ENCODE measurements at regions of chr2 and their contacts with region 1.

Region 1: GRCh38 chr2:85750587-85751575 is 2.9 kb upstream of the ATOH8 start:
- DNase-seq: no peak
- ATAC-seq: peak; percentile 74
- H3K4me3 ChIP-seq: no peak overlapping the region
- H3K27ac ChIP-seq: no peak overlapping the region
- H3K4me1 ChIP-seq: peaks cover 20% of the 10 kb centered on the region
- H3K27me3 ChIP-seq: no peaks in the 10 kb centered on the region
- CTCF ChIP-seq: peak; percentile 92

Region 2: DNA sequence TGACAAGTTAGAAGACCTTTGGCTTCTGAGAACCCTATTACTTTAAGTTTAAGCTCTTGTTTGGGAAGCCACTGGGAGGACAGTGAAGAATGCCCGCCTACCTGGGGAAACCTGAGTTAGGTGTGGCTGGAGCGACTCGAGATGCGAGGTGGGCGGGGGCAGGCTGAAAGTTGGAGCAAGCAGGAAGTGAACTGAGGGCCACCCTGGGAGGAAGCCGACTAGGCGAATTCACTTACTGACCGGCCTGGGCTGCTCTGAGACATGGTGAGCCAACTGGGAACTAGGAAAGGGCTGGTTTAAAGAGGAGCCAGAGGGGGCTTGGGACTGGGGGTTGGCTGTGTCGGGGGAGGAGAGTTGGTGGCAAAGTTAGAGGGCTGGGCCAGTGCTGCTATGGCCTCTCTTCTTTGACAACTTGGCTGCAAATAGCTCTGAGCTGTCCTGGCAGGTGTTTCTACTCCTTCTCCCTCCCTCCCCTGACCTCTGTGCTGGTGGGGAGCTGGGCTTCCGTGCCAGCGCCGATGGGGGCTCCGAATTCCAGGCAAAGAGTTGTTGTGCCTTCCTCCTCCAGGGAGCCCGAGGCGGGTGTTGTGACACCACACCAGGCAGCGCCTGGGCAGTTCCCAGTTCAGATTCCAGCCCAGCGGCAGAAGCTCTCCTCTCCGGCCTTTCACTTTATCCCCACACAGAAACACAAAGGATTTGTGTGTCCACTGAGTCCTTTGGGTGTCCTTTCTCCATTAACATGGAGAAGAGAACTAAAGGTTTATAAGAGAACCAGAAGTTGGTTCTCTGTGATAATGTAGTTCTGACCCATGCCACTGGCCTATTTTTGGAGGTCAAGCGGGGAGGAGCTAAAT is 173.3 kb before region 1 on chr2 and contains the start of gene VAMP8:
- CTCF ChIA-PET with region 1: no interaction called
- POLR2A ChIA-PET with region 1: no interaction called
- in situ Hi-C with region 1: no loop called
- intact Hi-C with region 1: no loop called
- DNase-seq: no peak
- ATAC-seq: peak; percentile 87
- H3K4me3 ChIP-seq: peak within 1 kb of the TSS; percentile 49 to 66
- H3K27ac ChIP-seq: peak within 1 kb of the TSS; percentile 89
- H3K4me1 ChIP-seq: peaks cover 27% of the 10 kb centered on the region
- H3K27me3 ChIP-seq: no peaks in the 10 kb centered on the region
- CTCF ChIP-seq: no peak
- total RNA-seq, gene VAMP8: 93.2 TPM

Region 3: GRCh38 chr2:85678794-85679672 is 71.8 kb before region 1 on chr2:
- CTCF ChIA-PET with region 1: no interaction called
- POLR2A ChIA-PET with region 1: no interaction called
- in situ Hi-C with region 1: no loop called
- intact Hi-C with region 1: no loop called
- DNase-seq: no peak
- ATAC-seq: peak; percentile 96
- H3K4me3 ChIP-seq: 0 out of 4 replicates have a peak overlapping the region, but pooled peaks of 1 of the 2 experiments have one; percentile 13
- H3K27ac ChIP-seq: no peak overlapping the region
- H3K4me1 ChIP-seq: no peaks in the 10 kb centered on the region; the same call in 1 of the 2 replicates
- H3K27me3 ChIP-seq: no peaks in the 10 kb centered on the region
- CTCF ChIP-seq: peak; percentile 99

Region 4: DNA sequence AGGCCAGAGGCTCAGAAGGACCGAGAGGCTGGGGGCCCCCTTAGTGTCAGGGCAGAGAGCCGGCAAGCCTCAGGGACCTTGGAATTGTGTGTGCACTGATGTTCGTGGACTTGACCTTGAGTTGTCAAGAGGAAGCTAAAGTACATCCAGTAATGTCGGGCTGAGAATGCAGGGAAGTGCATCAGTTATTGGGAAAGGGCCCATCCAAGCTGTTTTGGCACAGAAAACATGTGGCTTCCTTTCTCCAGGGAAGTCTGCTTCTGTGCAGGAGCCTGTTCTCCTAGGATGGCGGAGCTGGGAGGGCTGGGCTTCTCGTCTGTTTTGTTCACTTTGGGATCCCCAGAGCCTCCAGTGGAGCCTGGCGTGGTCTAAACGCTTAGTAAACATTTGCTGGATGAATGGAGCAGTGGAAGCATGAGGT is 26.6 kb after region 1 on chr2:
- CTCF ChIA-PET with region 1: interaction called, 10 read pairs
- POLR2A ChIA-PET with region 1: no interaction called
- in situ Hi-C with region 1: no loop called
- intact Hi-C with region 1: no loop called
- DNase-seq: no peak
- ATAC-seq: no peak
- H3K4me3 ChIP-seq: no peak overlapping the region
- H3K27ac ChIP-seq: no peak overlapping the region; the same call in 1 of the 2 replicates
- H3K4me1 ChIP-seq: peaks cover 21% of the 10 kb centered on the region
- H3K27me3 ChIP-seq: no peaks in the 10 kb centered on the region
- CTCF ChIP-seq: no peak

Region 5: GRCh38 chr2:85797921-85798320 is 47.0 kb after region 1 on chr2:
- CTCF ChIA-PET with region 1: interaction called, 5 read pairs
- POLR2A ChIA-PET with region 1: no interaction called
- in situ Hi-C with region 1: no loop called
- intact Hi-C with region 1: loop called (anchors 5 kb)
- DNase-seq: no peak
- ATAC-seq: 0 out of 2 replicates have a peak, but pooled peaks have one; percentile 31
- H3K4me3 ChIP-seq: no peak overlapping the region
- H3K27ac ChIP-seq: no peak overlapping the region
- H3K4me1 ChIP-seq: peaks cover 2% of the 10 kb centered on the region
- H3K27me3 ChIP-seq: no peaks in the 10 kb centered on the region
- CTCF ChIP-seq: no peak

Region 6: GRCh38 chr2:85813982-85814801 is 63.3 kb after region 1 on chr2:
- CTCF ChIA-PET with region 1: interaction called, 9 read pairs
- POLR2A ChIA-PET with region 1: no interaction called
- in situ Hi-C with region 1: no loop called
- intact Hi-C with region 1: loop called (anchors 1 kb)
- DNase-seq: peak; percentile 63
- ATAC-seq: peak; percentile 99
- H3K4me3 ChIP-seq: no peak overlapping the region
- H3K27ac ChIP-seq: no peak overlapping the region
- H3K4me1 ChIP-seq: no peaks in the 10 kb centered on the region
- H3K27me3 ChIP-seq: no peaks in the 10 kb centered on the region
- CTCF ChIP-seq: peak; percentile 95

Region 7: GRCh38 chr2:86464652-86465051 is 713.8 kb after region 1 on chr2:
- CTCF ChIA-PET with region 1: no interaction called
- POLR2A ChIA-PET with region 1: no interaction called
- in situ Hi-C with region 1: no loop called
- intact Hi-C with region 1: no loop called
- DNase-seq: no peak
- ATAC-seq: no peak
- H3K4me3 ChIP-seq: no peak overlapping the region
- H3K27ac ChIP-seq: no peak overlapping the region
- H3K4me1 ChIP-seq: no peaks in the 10 kb centered on the region
- H3K27me3 ChIP-seq: no peaks in the 10 kb centered on the region
- CTCF ChIP-seq: no peak